ENCODE measurements at regions of chr17 and their contacts with region 1.

Region 1: DNA sequence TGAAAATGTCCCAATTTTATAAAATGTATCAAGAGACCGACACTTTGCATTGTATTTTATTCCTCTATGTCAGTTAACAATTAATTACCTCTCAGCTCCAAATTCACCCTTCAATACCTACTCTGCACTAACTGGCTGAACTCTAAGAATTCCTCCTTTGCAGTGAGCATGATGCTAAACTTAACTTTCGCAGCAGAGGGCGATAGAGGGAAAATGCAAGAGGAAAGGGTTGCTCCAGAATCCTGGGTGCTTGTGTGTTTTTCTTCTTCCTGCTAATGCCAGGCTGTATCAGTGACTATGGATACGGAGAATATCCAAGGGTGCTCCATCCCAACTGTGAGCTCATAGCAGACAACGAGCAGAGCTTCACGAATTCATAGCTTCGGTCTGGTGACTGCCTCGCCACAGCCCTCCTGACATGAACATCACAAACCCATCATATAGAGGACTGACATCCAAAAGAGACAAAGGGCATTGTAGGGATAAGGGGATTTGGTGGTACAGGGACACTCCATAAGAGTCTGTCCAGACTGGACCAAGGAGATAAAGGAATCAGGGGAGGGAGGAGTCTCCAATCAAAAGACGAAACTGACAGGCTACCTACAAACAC is 172.9 kb downstream of the STX8 start:
- DNase-seq: peak; percentile 16
- H3K4me3 ChIP-seq: no peak overlapping the region
- H3K27ac ChIP-seq: no peak overlapping the region
- H3K4me1 ChIP-seq: no peaks in the 10 kb centered on the region
- CTCF ChIP-seq: peak; percentile 75

Region 2: DNA sequence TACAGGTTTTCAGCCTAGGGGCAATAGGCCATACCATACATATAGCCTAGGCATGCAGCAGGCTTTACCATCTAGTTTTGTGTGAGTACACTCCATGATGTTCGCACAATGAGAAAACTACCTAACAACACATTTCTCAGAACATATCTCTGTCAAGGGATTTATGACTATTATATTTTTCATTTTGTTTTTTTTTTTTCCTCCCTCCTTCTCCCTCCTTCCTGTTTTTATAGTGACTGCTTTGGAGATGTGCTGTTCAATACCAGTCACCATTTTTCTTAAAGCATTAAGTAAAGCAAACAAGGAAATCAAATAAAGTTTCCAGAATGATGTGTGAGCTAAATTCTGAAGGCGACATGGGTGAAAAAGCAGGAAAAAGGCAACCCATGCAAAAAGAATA is 21.6 kb before region 1 on chr17:
- CTCF ChIA-PET with region 1: no interaction called
- POLR2A ChIA-PET with region 1: no interaction called
- intact Hi-C with region 1: loop called (anchors 2 kb)
- DNase-seq: no peak
- H3K4me3 ChIP-seq: no peak overlapping the region
- H3K27ac ChIP-seq: no peak overlapping the region
- H3K4me1 ChIP-seq: no peaks in the 10 kb centered on the region
- CTCF ChIP-seq: no peak

Region 3: DNA sequence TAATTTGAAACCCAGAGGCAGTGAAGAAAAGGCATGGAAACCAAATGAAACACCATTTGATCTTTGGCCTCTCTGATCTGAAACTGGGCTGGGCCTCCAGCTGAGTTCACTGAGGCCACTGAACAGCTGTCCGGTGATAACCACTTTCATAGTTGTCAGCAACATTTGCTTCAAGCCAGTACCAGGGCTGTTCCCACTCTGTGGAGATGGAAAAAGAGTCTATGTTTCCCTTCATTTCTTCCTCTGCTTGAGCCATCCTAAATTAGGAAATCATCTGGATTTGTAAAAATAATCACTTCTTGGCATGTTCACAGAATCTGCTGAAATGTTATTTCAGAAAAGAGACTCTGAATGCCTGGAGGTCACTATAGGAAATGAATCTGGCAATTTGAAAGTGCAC is 53.6 kb after region 1 on chr17:
- CTCF ChIA-PET with region 1: no interaction called
- POLR2A ChIA-PET with region 1: no interaction called
- intact Hi-C with region 1: no loop called
- DNase-seq: no peak
- H3K4me3 ChIP-seq: no peak overlapping the region
- H3K27ac ChIP-seq: no peak overlapping the region
- H3K4me1 ChIP-seq: no peaks in the 10 kb centered on the region
- CTCF ChIP-seq: no peak

Region 4: DNA sequence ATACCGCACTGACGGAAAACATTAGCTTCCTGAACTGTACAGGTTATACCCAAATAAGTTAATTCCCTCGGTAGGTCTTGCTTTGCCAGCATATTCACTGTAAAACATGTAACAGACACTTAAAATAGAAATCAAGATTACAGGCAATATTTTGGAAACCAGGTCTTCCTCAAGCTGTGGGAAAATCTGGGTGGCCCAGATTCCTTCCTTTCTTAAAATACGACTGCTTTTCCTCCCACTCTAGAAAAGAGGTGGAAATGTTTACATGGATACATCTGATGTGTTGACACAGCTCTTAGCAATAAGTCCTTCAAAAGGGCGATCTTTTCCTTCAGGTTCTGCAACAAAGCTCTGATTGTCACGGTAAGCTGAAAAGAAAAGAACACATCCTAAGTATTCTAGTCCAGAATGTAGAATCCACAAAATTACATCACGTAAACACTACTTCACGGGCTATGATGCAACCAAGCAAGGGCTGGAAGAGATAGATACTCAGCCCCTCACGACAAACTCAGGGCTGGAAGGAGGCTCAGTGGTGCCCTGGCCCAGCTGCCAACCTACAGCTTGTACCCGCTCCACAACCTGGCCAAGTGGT is 154.6 kb after region 1 on chr17:
- CTCF ChIA-PET with region 1: no interaction called
- POLR2A ChIA-PET with region 1: no interaction called
- intact Hi-C with region 1: loop called (anchors 10 kb)
- DNase-seq: no peak
- H3K4me3 ChIP-seq: no peak overlapping the region
- H3K27ac ChIP-seq: no peak overlapping the region
- H3K4me1 ChIP-seq: no peaks in the 10 kb centered on the region
- CTCF ChIP-seq: no peak